ENCODE measurements at regions of chr3 and their contacts with region 1.

Region 1: DNA sequence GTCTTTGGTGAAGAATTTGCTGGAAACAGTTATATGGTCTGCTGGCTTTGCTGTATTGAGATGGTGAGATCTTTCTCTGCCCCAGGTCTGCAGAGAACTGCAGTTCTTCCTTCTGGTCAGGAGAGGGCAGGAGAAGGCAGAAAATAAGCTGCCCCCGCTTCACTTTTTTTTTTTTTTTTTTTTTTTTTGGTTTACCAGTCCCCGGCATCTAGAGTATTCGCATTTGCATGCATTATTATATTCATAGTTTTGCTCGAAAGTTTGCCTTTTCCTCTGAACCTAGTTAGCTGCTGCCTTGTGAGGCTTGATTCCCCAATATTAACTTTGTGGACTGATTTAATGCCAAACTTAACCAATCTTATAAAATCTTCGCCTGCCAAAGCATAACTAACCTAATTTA is 10.6 kb upstream of the PARL start:
- DNase-seq: no peak
- H3K4me3 ChIP-seq: no peak overlapping the region
- H3K27ac ChIP-seq: no peak overlapping the region
- H3K4me1 ChIP-seq: no peaks in the 10 kb centered on the region
- H3K27me3 ChIP-seq: peaks cover 3% of the 10 kb centered on the region
- CTCF ChIP-seq: peak; percentile 69

Region 2: GRCh38 chr3:184154885-184155643 is 259.8 kb after region 1 on chr3 and contains the start of gene DVL3:
- intact Hi-C with region 1: loop called (anchors 10 kb)
- DNase-seq: peak; percentile 61
- H3K4me3 ChIP-seq: peak within 1 kb of the TSS; percentile 88
- H3K27ac ChIP-seq: peak within 1 kb of the TSS; percentile 88
- H3K4me1 ChIP-seq: peaks cover 9% of the 10 kb centered on the region
- H3K27me3 ChIP-seq: no peaks in the 10 kb centered on the region
- CTCF ChIP-seq: no peak
- total RNA-seq, gene DVL3: 60.8 to 64.6 TPM

Region 3: GRCh38 chr3:184241447-184242296 is 346.4 kb after region 1 on chr3:
- intact Hi-C with region 1: loop called (anchors 5 kb)
- DNase-seq: peak; percentile 78
- H3K4me3 ChIP-seq: peak overlapping the region; percentile 32
- H3K27ac ChIP-seq: peak overlapping the region; percentile 3
- H3K4me1 ChIP-seq: no peaks in the 10 kb centered on the region
- H3K27me3 ChIP-seq: no peaks in the 10 kb centered on the region
- CTCF ChIP-seq: peak; percentile 61

Region 4: GRCh38 chr3:184289426-184289938 is 394.2 kb after region 1 on chr3:
- intact Hi-C with region 1: loop called (anchors 5 kb)
- DNase-seq: peak; percentile 52
- H3K4me3 ChIP-seq: no peak overlapping the region
- H3K27ac ChIP-seq: no peak overlapping the region
- H3K4me1 ChIP-seq: no peaks in the 10 kb centered on the region
- H3K27me3 ChIP-seq: no peaks in the 10 kb centered on the region
- CTCF ChIP-seq: peak; percentile 48

Measured in colonic mucosa (tissue), 4 donors.